ENCODE measurements at regions of chr9 and their contacts with region 1.

Region 1: DNA sequence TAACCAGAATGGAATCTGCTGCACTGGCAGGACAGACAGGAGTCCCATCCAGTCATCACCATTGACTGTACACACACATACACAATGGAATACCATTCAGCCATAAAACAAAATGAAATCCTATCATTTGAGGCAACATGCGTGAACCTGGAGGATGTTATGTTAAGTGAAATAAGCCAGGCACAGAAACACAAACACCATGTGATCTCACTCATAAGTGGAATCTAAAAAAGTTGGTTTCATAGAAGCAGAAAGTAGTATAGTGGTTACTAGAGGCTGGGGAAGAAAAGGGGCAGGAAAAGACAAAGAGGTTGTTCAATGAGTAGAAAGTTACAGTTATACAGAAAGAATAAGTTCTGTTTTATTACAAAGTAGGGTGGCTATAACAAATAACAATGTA is 884.0 kb upstream of the ACO1 start:
- DNase-seq: no peak
- ATAC-seq: no peak
- H3K4me3 ChIP-seq: no peak overlapping the region
- H3K27ac ChIP-seq: no peak overlapping the region
- H3K4me1 ChIP-seq: no peaks in the 10 kb centered on the region
- H3K27me3 ChIP-seq: no peaks in the 10 kb centered on the region
- CTCF ChIP-seq: no peak
- POLR2A ChIP-seq: no peak

Region 2: GRCh38 chr9:31445960-31446359 is 54.5 kb before region 1 on chr9:
- in situ Hi-C with region 1: loop called in 1 of 4 experiments (anchors 10 kb)
- intact Hi-C with region 1: no loop called
- DNase-seq: no peak
- ATAC-seq: no peak
- H3K4me3 ChIP-seq: no peak overlapping the region
- H3K27ac ChIP-seq: no peak overlapping the region
- H3K4me1 ChIP-seq: no peaks in the 10 kb centered on the region
- H3K27me3 ChIP-seq: no peaks in the 10 kb centered on the region
- CTCF ChIP-seq: no peak
- POLR2A ChIP-seq: no peak

Region 3: GRCh38 chr9:31574006-31574765 is 73.8 kb after region 1 on chr9:
- in situ Hi-C with region 1: no loop called
- intact Hi-C with region 1: no loop called
- DNase-seq: no peak
- ATAC-seq: no peak
- H3K4me3 ChIP-seq: no peak overlapping the region
- H3K27ac ChIP-seq: no peak overlapping the region
- H3K4me1 ChIP-seq: no peaks in the 10 kb centered on the region
- H3K27me3 ChIP-seq: no peaks in the 10 kb centered on the region
- CTCF ChIP-seq: no peak
- POLR2A ChIP-seq: no peak